ENCODE measurements at regions of chr2 and their contacts with region 1.

Region 1: GRCh38 chr2:112884869-112885505 is 26.0 kb upstream of the IL37 start:
- DNase-seq: peak; percentile 46 to 96
- H3K4me3 ChIP-seq: no peak overlapping the region
- H3K27ac ChIP-seq: no peak overlapping the region
- H3K4me1 ChIP-seq: 0 out of 7 replicates have a peak, but pooled peaks cover 0 to 2% (median 0%) of the 10 kb centered on the region in 4 experiments
- H3K27me3 ChIP-seq: no peaks in the 10 kb centered on the region
- CTCF ChIP-seq: peak; percentile 70 to 88 (median 83)
- EP300 ChIP-seq: no peak
- POLR2A ChIP-seq: no peak
- RAD21 ChIP-seq: peak; percentile 94 to 96

Region 2: DNA sequence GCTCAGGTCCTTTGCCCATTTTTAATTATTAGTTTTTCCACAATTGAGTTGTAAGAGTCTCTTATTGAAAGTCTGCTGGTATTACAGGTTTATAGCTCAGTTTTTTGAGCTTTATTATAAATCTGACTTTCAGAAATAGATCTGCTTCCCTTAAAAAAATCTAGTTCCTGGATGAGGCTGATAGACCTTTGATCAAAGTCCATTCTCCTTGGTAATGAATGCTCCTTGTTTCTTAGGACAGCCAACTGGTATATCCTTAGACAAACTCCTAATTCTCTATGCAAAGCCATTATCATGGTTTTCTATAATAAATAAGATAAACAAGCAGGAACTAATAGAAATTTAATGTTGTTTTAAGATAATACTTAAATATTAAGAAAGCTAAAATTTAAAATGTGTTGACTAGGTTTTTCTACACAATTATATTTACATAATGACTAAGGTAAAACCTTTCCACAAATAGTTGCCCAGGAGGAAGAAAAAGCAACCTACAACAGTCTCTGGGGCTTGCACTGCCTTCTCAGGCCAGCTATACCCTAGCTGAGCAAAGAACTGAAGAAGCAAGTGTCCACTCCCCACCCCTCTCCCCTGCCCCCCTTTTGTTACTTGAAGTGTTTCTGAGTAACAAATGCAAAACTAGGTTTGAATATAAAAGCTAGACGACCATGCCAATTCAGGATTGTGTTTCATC is 147.3 kb before region 1 on chr2:
- CTCF ChIA-PET with region 1: interaction called, 20 read pairs
- POLR2A ChIA-PET with region 1: no interaction called
- DNase-seq: no peak
- H3K4me3 ChIP-seq: no peak overlapping the region
- H3K27ac ChIP-seq: no peak overlapping the region
- H3K4me1 ChIP-seq: no peaks in the 10 kb centered on the region
- H3K27me3 ChIP-seq: no peaks in the 10 kb centered on the region
- CTCF ChIP-seq: no peak
- EP300 ChIP-seq: no peak
- POLR2A ChIP-seq: no peak
- RAD21 ChIP-seq: no peak

Region 3: GRCh38 chr2:112764071-112765044 is 120.6 kb before region 1 on chr2 and contains the start of gene CKAP2L:
- CTCF ChIA-PET with region 1: interaction called, 17 read pairs
- POLR2A ChIA-PET with region 1: no interaction called
- DNase-seq: peak; percentile 90 to 91
- H3K4me3 ChIP-seq: peak within 1 kb of the TSS; percentile 76 to 91 (median 86)
- H3K27ac ChIP-seq: no peak within 1 kb of the TSS
- H3K4me1 ChIP-seq: peaks cover 0 to 8% (median 3%) of the 10 kb centered on the region in 4 experiments; a peak in 3 of 7 replicates
- H3K27me3 ChIP-seq: no peaks in the 10 kb centered on the region
- CTCF ChIP-seq: no peak
- EP300 ChIP-seq: no peak
- POLR2A ChIP-seq: peak in 1 of 2 experiments; percentile 36; a peak in 1 of 3 replicates
- RAD21 ChIP-seq: no peak
- total RNA-seq, gene CKAP2L: 19.3 and 20.7 TPM in 2 replicates

Region 4: DNA sequence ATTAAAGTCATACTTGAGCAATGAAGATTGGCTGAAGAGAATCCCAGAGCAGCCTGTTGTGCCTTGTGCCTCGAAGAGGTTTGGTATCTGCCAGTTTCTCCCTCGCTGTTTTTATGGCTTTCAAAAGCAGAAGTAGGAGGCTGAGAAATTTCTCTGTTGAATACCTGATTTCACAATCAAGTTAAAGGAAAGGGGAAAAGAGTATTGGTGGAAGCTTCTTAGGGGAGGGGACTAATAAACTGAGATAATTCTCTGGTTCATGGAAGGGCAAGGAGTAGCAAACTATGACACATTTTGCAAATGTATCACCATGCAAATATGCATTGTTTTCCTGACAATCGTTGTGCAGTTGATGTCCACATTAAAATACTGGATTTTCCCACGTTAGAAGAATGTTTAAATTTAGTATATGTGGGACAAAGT is 48.3 kb before region 1 on chr2 and contains the start of gene IL1B:
- CTCF ChIA-PET with region 1: interaction called, 14 read pairs
- POLR2A ChIA-PET with region 1: no interaction called
- DNase-seq: no peak
- H3K4me3 ChIP-seq: no peak within 1 kb of the TSS
- H3K27ac ChIP-seq: no peak within 1 kb of the TSS
- H3K4me1 ChIP-seq: peaks cover 0 to 4% (median 3%) of the 10 kb centered on the region in 4 experiments; a peak in 2 of 7 replicates
- H3K27me3 ChIP-seq: no peaks in the 10 kb centered on the region
- CTCF ChIP-seq: no peak
- EP300 ChIP-seq: no peak
- POLR2A ChIP-seq: no peak
- RAD21 ChIP-seq: no peak
- total RNA-seq, gene IL1B: not detected in 2 replicates

Region 5: GRCh38 chr2:112941753-112942658 is 57.0 kb after region 1 on chr2:
- CTCF ChIA-PET with region 1: interaction called, 14 read pairs
- POLR2A ChIA-PET with region 1: no interaction called
- DNase-seq: peak; percentile 68 to 88
- H3K4me3 ChIP-seq: no peak overlapping the region
- H3K27ac ChIP-seq: no peak overlapping the region
- H3K4me1 ChIP-seq: no peaks in the 10 kb centered on the region
- H3K27me3 ChIP-seq: no peaks in the 10 kb centered on the region
- CTCF ChIP-seq: peak; percentile 94 to 97 (median 96)
- EP300 ChIP-seq: no peak
- POLR2A ChIP-seq: no peak
- RAD21 ChIP-seq: peak; percentile 90 to 91

Region 6: GRCh38 chr2:112972423-112973086 is 87.6 kb after region 1 on chr2:
- CTCF ChIA-PET with region 1: no interaction called
- POLR2A ChIA-PET with region 1: no interaction called
- DNase-seq: no peak
- H3K4me3 ChIP-seq: no peak overlapping the region
- H3K27ac ChIP-seq: no peak overlapping the region
- H3K4me1 ChIP-seq: no peaks in the 10 kb centered on the region
- H3K27me3 ChIP-seq: no peaks in the 10 kb centered on the region
- CTCF ChIP-seq: no peak
- EP300 ChIP-seq: no peak
- POLR2A ChIP-seq: no peak
- RAD21 ChIP-seq: no peak